Astrocyte of the cerebellum (primary cell): ENCODE measurements at regions of chr9 and their contacts with region 1.

Region 1: DNA sequence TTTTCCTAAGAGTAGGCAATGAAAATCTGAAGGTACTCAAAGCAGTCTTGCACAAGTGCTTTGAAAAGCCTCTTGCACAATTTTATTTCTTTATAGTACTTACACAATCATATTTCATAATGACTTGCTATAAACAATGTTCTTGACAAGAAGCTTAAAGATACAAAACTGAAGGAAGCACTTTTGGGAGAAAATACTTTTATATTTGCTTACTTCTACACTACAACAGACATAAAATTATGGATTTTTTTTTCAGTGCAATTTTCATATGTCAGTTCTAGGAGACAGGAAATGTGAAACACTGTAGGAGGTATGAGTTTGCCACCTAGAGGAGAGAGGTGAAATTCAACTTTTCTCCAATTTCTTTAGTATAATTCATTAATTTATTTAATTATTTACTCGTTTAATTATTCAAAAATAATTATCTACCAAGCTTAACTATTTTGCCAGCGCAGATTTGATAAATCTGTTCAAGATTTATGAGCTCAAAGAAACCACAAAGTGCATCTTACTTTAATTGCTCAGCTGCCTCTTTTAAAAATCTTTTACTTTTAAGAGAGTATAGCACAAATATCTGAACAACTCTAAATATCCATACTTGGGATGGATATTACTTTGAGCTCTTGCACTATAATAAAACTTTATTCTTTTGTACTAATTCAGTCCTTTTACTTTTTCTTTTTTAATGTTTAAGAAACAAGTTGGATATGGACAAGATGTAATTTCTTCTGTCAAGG is 29.0 kb upstream of the CDKN2B start:
- DNase-seq: no peak
- H3K4me3 ChIP-seq: no peak overlapping the region
- CTCF ChIP-seq: peak; percentile 43

Region 2: GRCh38 chr9:22244141-22245011 is 206.3 kb after region 1 on chr9:
- in situ Hi-C with region 1: loop called (anchors 25 kb)
- DNase-seq: peak; percentile 44
- H3K4me3 ChIP-seq: no peak overlapping the region
- CTCF ChIP-seq: peak; percentile 79